Cardiac septum (tissue), 1 donor: ENCODE measurements at regions of chr5 and their contacts with region 1.

Region 1: GRCh38 chr5:173165177-173166016 is 21.1 kb downstream of the BNIP1 start:
- DNase-seq: no peak

Region 2: GRCh38 chr5:173069671-173070070 is 95.7 kb before region 1 on chr5:
- intact Hi-C with region 1: no loop called
- DNase-seq: no peak

Region 3: GRCh38 chr5:173228639-173229381 is 63.4 kb after region 1 on chr5:
- intact Hi-C with region 1: loop called (anchors 5 kb)
- DNase-seq: no peak